GM23248 (cell line): ENCODE measurements at regions of chr12 and their contacts with region 1.

Region 1: GRCh38 chr12:64556231-64556630 is 54.1 kb upstream of the RASSF3 start:
- DNase-seq: peak; percentile 17
- H3K4me3 ChIP-seq: no peak overlapping the region
- H3K27ac ChIP-seq: no peak overlapping the region
- H3K4me1 ChIP-seq: peaks cover 12% of the 10 kb centered on the region
- H3K27me3 ChIP-seq: peaks cover 6% of the 10 kb centered on the region

Region 2: GRCh38 chr12:64010069-64010699 is 546.0 kb before region 1 on chr12:
- in situ Hi-C with region 1: no loop called
- DNase-seq: peak; percentile 86
- H3K4me3 ChIP-seq: no peak overlapping the region
- H3K27ac ChIP-seq: peak overlapping the region; percentile 85
- H3K4me1 ChIP-seq: peaks cover 60% of the 10 kb centered on the region
- H3K27me3 ChIP-seq: no peaks in the 10 kb centered on the region

Region 3: GRCh38 chr12:64699504-64700115 is 143.4 kb after region 1 on chr12:
- in situ Hi-C with region 1: loop called (anchors 5 kb)
- DNase-seq: no peak
- H3K4me3 ChIP-seq: no peak overlapping the region
- H3K27ac ChIP-seq: no peak overlapping the region
- H3K4me1 ChIP-seq: no peaks in the 10 kb centered on the region
- H3K27me3 ChIP-seq: no peaks in the 10 kb centered on the region